ENCODE measurements at regions of chr20 and their contacts with region 1.

Region 1: DNA sequence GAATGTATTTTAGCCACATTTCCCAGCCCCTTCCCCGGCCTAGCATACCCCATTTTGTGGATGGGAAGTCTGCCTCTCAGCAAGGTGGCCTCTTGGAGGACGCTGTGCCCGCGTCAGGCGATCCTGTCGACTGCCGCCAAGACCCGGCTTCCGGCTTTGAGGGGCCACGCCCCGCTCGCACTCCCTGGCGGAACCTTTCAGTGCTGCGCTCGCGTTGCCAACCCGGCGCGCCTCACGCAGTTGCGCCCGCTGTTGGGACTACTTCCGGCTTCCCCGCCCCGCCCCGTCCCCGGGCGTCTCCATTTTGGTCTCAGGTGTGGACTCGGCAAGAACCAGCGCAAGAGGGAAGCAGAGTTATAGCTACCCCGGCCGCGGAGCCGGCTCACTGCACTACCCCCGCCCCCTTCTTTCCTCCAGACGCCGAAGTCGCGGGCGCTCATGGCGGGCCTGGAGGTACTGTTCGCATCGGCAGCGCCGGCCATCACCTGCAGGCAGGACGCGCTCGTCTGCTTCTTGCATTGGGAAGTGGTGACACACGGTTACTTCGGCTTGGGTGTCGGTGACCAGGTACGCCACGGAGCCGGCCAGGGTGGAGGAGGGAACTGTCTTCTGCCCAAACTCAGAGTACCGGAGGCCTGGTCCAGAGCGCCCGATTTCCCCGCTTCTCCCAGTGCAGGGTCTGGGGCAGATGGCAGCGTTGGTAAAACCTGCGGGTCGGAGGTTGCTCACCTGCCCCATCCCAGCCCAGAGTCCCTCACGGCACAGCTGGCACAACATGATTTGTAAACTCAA is at the start of gene PSMF1:
- DNase-seq: peak; percentile 97
- ATAC-seq: peak; percentile 97
- H3K4me3 Mint-ChIP-seq: peak within 1 kb of the TSS; percentile 94
- H3K27ac Mint-ChIP-seq: peak within 1 kb of the TSS; percentile 93
- H3K4me1 Mint-ChIP-seq: peaks cover 49% of the 10 kb centered on the region
- H3K27me3 Mint-ChIP-seq: no peaks in the 10 kb centered on the region
- total RNA-seq, gene PSMF1: 143 to 178 TPM

Region 2: GRCh38 chr20:513429-513828 is 605.1 kb before region 1 on chr20:
- CTCF ChIA-PET with region 1: no interaction called
- POLR2A ChIA-PET with region 1: no interaction called
- intact Hi-C with region 1: no loop called
- DNase-seq: no peak
- ATAC-seq: no peak
- H3K4me3 Mint-ChIP-seq: no peak overlapping the region
- H3K27ac Mint-ChIP-seq: no peak overlapping the region
- H3K4me1 Mint-ChIP-seq: peaks cover 53% of the 10 kb centered on the region
- H3K27me3 Mint-ChIP-seq: no peaks in the 10 kb centered on the region

Region 3: DNA sequence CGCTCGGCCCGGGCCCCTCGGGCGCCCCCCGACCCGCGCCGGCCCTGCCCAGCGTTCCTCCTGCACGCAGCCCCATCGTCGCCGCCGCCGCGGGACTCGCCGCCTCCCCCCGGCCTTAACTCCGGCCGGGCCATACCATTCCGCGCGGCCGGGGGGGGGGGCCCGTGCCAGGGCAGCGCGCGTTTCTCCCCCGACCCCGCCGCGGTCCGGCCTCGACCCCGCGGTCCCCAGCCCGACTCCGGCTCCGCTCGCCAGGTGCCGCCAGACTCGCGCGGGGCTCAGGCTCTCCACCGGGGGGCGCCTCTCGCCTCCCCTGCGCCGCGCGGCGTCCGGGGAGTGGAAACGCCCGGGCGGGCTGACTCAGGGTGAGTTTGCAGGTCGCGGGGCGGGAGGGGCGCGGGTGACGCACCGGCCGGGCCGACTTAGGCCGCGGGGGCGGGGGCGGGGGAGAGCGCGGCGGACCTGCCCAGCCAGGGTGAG is 465.4 kb before region 1 on chr20 and contains the start of gene SRXN1:
- CTCF ChIA-PET with region 1: no interaction called
- POLR2A ChIA-PET with region 1: no interaction called
- intact Hi-C with region 1: loop called in 1 of 2 experiments (anchors 1 kb)
- DNase-seq: peak; percentile 91
- ATAC-seq: peak; percentile 93
- H3K4me3 Mint-ChIP-seq: peak within 1 kb of the TSS; percentile 76
- H3K27ac Mint-ChIP-seq: peak within 1 kb of the TSS; percentile 80
- H3K4me1 Mint-ChIP-seq: peaks cover 24% of the 10 kb centered on the region
- H3K27me3 Mint-ChIP-seq: peaks cover 8% of the 10 kb centered on the region
- total RNA-seq, gene SRXN1: 12.6 to 13.5 TPM

Region 4: GRCh38 chr20:1005452-1006027 is 113.0 kb before region 1 on chr20:
- CTCF ChIA-PET with region 1: no interaction called
- POLR2A ChIA-PET with region 1: no interaction called
- intact Hi-C with region 1: no loop called
- DNase-seq: peak; percentile 60
- ATAC-seq: peak; percentile 99
- H3K4me3 Mint-ChIP-seq: no peak overlapping the region
- H3K27ac Mint-ChIP-seq: no peak overlapping the region
- H3K4me1 Mint-ChIP-seq: peaks cover 7% of the 10 kb centered on the region
- H3K27me3 Mint-ChIP-seq: peaks cover 30% of the 10 kb centered on the region

Region 5: GRCh38 chr20:1185790-1186334 is 67.3 kb after region 1 on chr20:
- CTCF ChIA-PET with region 1: no interaction called
- POLR2A ChIA-PET with region 1: no interaction called
- intact Hi-C with region 1: loop called in 1 of 2 experiments (anchors 1 kb)
- DNase-seq: peak; percentile 79
- ATAC-seq: peak; percentile 82
- H3K4me3 Mint-ChIP-seq: peak overlapping the region; percentile 32
- H3K27ac Mint-ChIP-seq: no peak overlapping the region
- H3K4me1 Mint-ChIP-seq: peaks cover 6% of the 10 kb centered on the region
- H3K27me3 Mint-ChIP-seq: peaks cover 24% of the 10 kb centered on the region

Region 6: DNA sequence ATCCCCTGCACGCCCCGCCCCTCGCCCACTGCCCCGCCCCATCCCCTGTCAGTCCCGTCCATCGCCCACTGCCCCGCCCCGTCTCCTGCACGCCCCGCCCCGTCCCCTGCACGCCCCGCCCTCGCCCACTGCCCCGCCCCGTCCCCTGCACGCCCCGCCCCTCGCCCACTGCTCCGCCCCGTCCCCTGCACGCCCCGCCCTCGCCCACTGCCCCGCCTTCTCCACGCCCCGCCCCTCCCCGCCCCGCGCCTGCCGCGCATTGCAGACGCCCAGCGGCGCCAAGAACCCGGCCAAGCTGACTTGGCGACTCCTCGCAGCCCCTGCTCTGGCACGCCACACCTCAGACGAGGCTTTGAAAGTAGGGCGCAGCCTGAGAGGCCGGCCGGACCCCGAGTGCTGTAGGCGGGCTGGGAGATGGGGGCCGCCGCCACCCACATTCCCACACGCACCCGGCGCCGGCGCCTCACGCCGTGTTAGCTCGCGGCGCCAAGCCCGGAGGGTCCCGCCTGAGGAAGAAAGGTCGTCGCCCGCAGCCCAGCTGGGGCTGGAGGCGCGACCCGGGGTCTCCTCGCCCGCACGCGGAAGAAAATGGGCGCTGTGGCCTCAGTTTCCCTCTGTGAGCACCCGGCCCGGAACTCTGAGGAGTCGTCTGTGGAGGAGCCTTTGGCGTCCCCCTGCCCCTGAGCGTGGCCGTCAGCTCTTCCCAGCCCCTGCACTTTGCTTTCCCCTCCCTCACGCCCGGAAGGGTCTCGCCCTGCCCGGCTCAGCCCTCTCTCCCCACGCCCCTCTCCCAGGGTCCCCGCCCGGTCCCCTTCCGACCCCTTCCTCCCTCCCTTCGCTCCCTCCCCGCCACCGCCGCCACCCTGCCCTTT is 107.5 kb after region 1 on chr20 and contains the start of gene RAD21L1:
- CTCF ChIA-PET with region 1: interaction called, 3 read pairs
- POLR2A ChIA-PET with region 1: no interaction called
- intact Hi-C with region 1: loop called in 1 of 2 experiments (anchors 1 kb)
- DNase-seq: peak; percentile 94
- ATAC-seq: peak; percentile 85
- H3K4me3 Mint-ChIP-seq: peak within 1 kb of the TSS; percentile 75
- H3K27ac Mint-ChIP-seq: peak within 1 kb of the TSS; percentile 79
- H3K4me1 Mint-ChIP-seq: peaks cover 11% of the 10 kb centered on the region
- H3K27me3 Mint-ChIP-seq: peaks cover 9% of the 10 kb centered on the region
- total RNA-seq, gene RAD21L1: 0.32 TPM in 1 of 2 experiments, not detected in the other

Region 7: GRCh38 chr20:2470423-2471193 is 1352.1 kb after region 1 on chr20 and contains the start of gene SNRPB:
- CTCF ChIA-PET with region 1: no interaction called
- POLR2A ChIA-PET with region 1: no interaction called
- intact Hi-C with region 1: loop called in 1 of 2 experiments (anchors 1 kb)
- DNase-seq: peak; percentile 98
- ATAC-seq: peak; percentile 99
- H3K4me3 Mint-ChIP-seq: peak within 1 kb of the TSS; percentile 96
- H3K27ac Mint-ChIP-seq: peak within 1 kb of the TSS; percentile 100
- H3K4me1 Mint-ChIP-seq: peaks cover 49% of the 10 kb centered on the region
- H3K27me3 Mint-ChIP-seq: no peaks in the 10 kb centered on the region
- total RNA-seq, gene SNRPB: 348 to 466 TPM

Measured in activated CD4-positive, alpha-beta T cell treated with anti-CD3 and anti-CD28 coated beads for 36 hours (primary cell).